K562 (cell line): ENCODE measurements at regions of chr7 and their contacts with region 1.

Region 1: GRCh38 chr7:24979863-24980533 is at the start of gene OSBPL3:
- DNase-seq: peak; percentile 96 to 99 (median 98)
- ATAC-seq: peak; percentile 88
- H3K4me3 ChIP-seq: peak within 1 kb of the TSS; percentile 85
- H3K27ac ChIP-seq: peak within 1 kb of the TSS; percentile 80
- H3K4me1 ChIP-seq: peaks cover 21 to 34% of the 10 kb centered on the region in 2 experiments
- H3K27me3 ChIP-seq: no peaks in the 10 kb centered on the region
- CTCF ChIP-seq: peak in 2 of 3 experiments; percentile 22 to 53; a peak in 4 of 6 replicates
- EP300 ChIP-seq: no peak; the same call in 1 of the 2 replicates
- POLR2A ChIP-seq: peak; percentile 86
- RAD21 ChIP-seq: peak; percentile 14 to 36; a peak in 2 of 4 replicates
- polyA plus RNA-seq, gene OSBPL3: 4.8 to 6.8 TPM

Region 2: GRCh38 chr7:24907311-24907886 is 72.6 kb before region 1 on chr7:
- CTCF ChIA-PET with region 1: no interaction called
- POLR2A ChIA-PET with region 1: interaction called, 3 read pairs
- in situ Hi-C with region 1: no loop called
- intact Hi-C with region 1: loop called (anchors 5 kb)
- DNase-seq: peak in 3 of 4 experiments; percentile 27 to 72 (median 56)
- ATAC-seq: peak; percentile 71
- H3K4me3 ChIP-seq: peak overlapping the region; percentile 14; the same call in 1 of the 2 replicates
- H3K27ac ChIP-seq: peak overlapping the region; percentile 75
- H3K4me1 ChIP-seq: peaks cover 41 to 87% of the 10 kb centered on the region in 2 experiments
- H3K27me3 ChIP-seq: no peaks in the 10 kb centered on the region
- CTCF ChIP-seq: no peak
- EP300 ChIP-seq: no peak; the same call in 1 of the 2 replicates
- POLR2A ChIP-seq: peak; percentile 47; the same call in 1 of the 2 replicates
- RAD21 ChIP-seq: no peak; a peak in 1 of 4 replicates